ENCODE measurements at regions of chr7 and their contacts with region 1.

Region 1: GRCh38 chr7:95871078-95871782 is 98.9 kb downstream of the DYNC1I1 start:
- DNase-seq: peak in 2 of 6 donors; percentile 17 to 40
- ATAC-seq: peak; percentile 69 to 81 (median 78)
- H3K4me3 ChIP-seq: no peak overlapping the region
- H3K27ac ChIP-seq: no peak overlapping the region
- H3K4me1 ChIP-seq: no peaks in the 10 kb centered on the region
- H3K27me3 ChIP-seq: no peaks in the 10 kb centered on the region
- CTCF ChIP-seq: peak in 3 of 4 donors; percentile 21 to 50 (median 37)

Region 2: GRCh38 chr7:95577137-95577536 is 294.1 kb before region 1 on chr7:
- intact Hi-C with region 1: no loop called
- DNase-seq: no peak
- ATAC-seq: no peak
- H3K4me3 ChIP-seq: no peak overlapping the region
- H3K27ac ChIP-seq: no peak overlapping the region
- H3K4me1 ChIP-seq: no peaks in the 10 kb centered on the region
- H3K27me3 ChIP-seq: no peaks in the 10 kb centered on the region
- CTCF ChIP-seq: no peak

Region 3: DNA sequence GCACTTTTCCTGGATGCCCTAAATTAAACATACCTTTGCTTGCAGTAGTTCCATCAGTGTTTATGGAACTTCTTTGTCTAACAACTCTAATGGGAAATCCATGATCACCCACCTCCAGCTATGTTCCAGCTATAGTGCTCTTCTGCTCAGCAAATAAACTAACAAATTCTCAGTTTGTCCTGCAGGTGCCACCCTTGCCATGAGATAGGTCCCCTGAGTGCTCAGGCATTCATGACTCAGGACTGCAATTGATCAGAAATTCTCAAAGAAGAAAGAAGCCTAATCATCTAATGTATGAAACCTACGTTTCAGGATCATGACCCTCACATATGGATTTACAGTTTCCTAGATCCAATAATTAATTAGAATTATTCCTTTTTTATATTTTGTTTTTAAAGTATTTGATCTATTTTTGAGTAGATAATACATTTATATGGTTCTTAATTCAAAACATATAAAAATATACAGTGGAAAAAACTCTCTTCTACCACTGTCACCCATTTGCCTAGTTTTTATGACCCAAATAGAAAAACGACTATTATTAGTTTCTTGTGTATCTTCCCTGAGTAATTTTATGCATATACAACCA is 147.5 kb before region 1 on chr7:
- intact Hi-C with region 1: loop called in 2 of 3 experiments (anchors 5 to 10 kb)
- DNase-seq: peak in 3 of 6 donors; percentile 12 to 53 (median 32)
- ATAC-seq: peak; percentile 71 to 94 (median 92)
- H3K4me3 ChIP-seq: no peak overlapping the region
- H3K27ac ChIP-seq: no peak overlapping the region
- H3K4me1 ChIP-seq: no peaks in the 10 kb centered on the region
- H3K27me3 ChIP-seq: no peaks in the 10 kb centered on the region
- CTCF ChIP-seq: peak in 3 of 4 donors; percentile 21 to 33 (median 32)